GM12878 (cell line): ENCODE measurements at regions of chr17 and their contacts with region 1.

Region 1: GRCh38 chr17:9676742-9677387 is 31.5 kb downstream of the USP43 start:
- DNase-seq: peak; percentile 9
- ATAC-seq: peak; percentile 36
- H3K4me3 ChIP-seq: no peak overlapping the region
- H3K27ac ChIP-seq: no peak overlapping the region
- H3K4me1 ChIP-seq: no peaks in the 10 kb centered on the region
- H3K27me3 ChIP-seq: no peaks in the 10 kb centered on the region
- CTCF ChIP-seq: no peak
- EP300 ChIP-seq: no peak
- POLR2A ChIP-seq: no peak
- RAD21 ChIP-seq: no peak

Region 2: GRCh38 chr17:9575381-9576101 is 101.3 kb before region 1 on chr17 and contains the start of gene STX8:
- CTCF ChIA-PET with region 1: interaction called, 11 read pairs
- POLR2A ChIA-PET with region 1: no interaction called
- RAD21 ChIA-PET with region 1: interaction called, 3 read pairs
- SMC1A ChIA-PET with region 1: no interaction called
- in situ Hi-C with region 1: no loop called
- intact Hi-C with region 1: no loop called
- DNase-seq: peak; percentile 48
- ATAC-seq: peak; percentile 96
- H3K4me3 ChIP-seq: peak within 1 kb of the TSS; percentile 84
- H3K27ac ChIP-seq: peak within 1 kb of the TSS; percentile 80
- H3K4me1 ChIP-seq: peaks cover 6% of the 10 kb centered on the region
- H3K27me3 ChIP-seq: no peaks in the 10 kb centered on the region
- CTCF ChIP-seq: no peak
- EP300 ChIP-seq: no peak
- POLR2A ChIP-seq: peak; percentile 80
- RAD21 ChIP-seq: no peak
- polyA plus RNA-seq, gene STX8: 147 to 151 TPM

Region 3: DNA sequence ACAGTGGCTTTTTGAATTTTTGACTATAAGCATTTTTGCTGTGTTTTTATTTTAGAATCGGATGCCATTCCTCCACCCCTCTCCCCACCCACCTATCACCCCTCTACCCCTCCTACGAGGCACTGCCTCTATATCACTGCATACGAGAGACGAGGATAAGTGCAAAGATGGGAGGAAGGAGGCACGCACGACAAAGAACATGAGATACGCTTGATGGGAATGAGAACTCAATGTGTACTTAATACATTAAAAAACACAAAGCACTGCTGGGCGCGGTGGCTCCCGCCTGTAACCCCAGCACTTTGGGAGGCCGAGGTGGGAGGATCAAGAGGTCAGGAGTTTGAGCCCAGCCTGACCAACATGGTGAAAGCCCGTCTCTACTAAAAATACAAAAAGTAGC is 40.4 kb before region 1 on chr17:
- CTCF ChIA-PET with region 1: no interaction called
- POLR2A ChIA-PET with region 1: no interaction called
- RAD21 ChIA-PET with region 1: no interaction called
- SMC1A ChIA-PET with region 1: no interaction called
- in situ Hi-C with region 1: no loop called
- intact Hi-C with region 1: no loop called
- DNase-seq: no peak
- ATAC-seq: no peak
- H3K4me3 ChIP-seq: no peak overlapping the region
- H3K27ac ChIP-seq: no peak overlapping the region
- H3K4me1 ChIP-seq: no peaks in the 10 kb centered on the region
- H3K27me3 ChIP-seq: no peaks in the 10 kb centered on the region; a peak in 1 of 4 replicates
- CTCF ChIP-seq: no peak
- EP300 ChIP-seq: no peak
- POLR2A ChIP-seq: no peak
- RAD21 ChIP-seq: no peak